ENCODE measurements at regions of chr3 and their contacts with region 1.

Region 1: GRCh38 chr3:57169872-57170623 is 4.9 kb upstream of the IL17RD start:
- DNase-seq: peak; percentile 24 to 69 (median 48)
- ATAC-seq: peak; percentile 80
- H3K4me3 ChIP-seq: peak overlapping the region; percentile 22
- H3K4me3 Mint-ChIP-seq: peak overlapping the region; percentile 10 to 72 (median 46)
- H3K27ac ChIP-seq: no peak overlapping the region
- H3K27ac Mint-ChIP-seq: no peak overlapping the region
- H3K4me1 ChIP-seq: no peaks in the 10 kb centered on the region
- H3K4me1 Mint-ChIP-seq: peaks cover 0 to 11% (median 7%) of the 10 kb centered on the region in 7 donors
- H3K27me3 ChIP-seq: peaks cover 0 to 4% of the 10 kb centered on the region in 2 donors
- H3K27me3 Mint-ChIP-seq: peaks cover 50 to 72% (median 55%) of the 10 kb centered on the region in 5 donors

Region 2: DNA sequence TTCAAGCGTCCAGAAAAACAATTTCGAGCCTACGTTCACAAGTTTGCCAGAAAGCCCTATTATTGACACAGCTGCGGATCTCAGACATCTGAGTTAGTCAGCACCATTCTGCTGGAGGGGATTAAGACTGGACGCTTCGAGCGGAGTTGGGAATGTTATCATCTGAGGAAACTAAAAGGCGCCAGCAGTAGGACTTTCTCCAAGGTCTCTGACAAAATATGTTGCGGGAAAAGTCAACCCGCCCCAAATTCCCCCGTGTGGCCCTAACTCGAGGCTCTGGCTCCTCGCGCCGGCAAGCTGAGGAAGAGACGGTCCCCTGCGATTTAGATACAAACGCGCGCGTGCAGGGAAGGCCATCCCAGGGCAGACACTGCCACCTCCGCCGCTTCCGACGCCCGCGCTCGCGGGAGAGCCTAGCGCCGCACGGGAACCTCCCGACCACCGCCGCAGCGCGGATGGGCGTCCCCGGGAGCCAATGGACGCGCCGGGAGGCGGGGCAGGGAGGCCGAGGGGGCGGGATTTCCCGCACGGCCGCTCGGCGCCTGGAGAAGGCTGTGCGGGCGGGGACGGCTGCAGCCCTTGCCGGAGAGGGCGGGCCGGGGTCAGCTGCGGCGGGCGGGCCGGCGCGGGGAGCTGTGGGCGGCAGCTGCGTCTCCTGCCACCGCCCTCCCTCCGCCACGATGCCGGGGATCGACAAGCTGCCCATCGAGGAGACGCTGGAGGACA is 57.3 kb after region 1 on chr3 and contains the start of gene APPL1:
- CTCF ChIA-PET with region 1: no interaction called
- POLR2A ChIA-PET with region 1: no interaction called
- intact Hi-C with region 1: loop called (anchors 1 kb)
- DNase-seq: peak; percentile 76 to 97 (median 82)
- ATAC-seq: peak; percentile 96
- H3K4me3 ChIP-seq: peak within 1 kb of the TSS; percentile 88
- H3K4me3 Mint-ChIP-seq: peak within 1 kb of the TSS; percentile 89 to 95 (median 93)
- H3K27ac ChIP-seq: peak within 1 kb of the TSS; percentile 71
- H3K27ac Mint-ChIP-seq: peak within 1 kb of the TSS; percentile 72 to 90 (median 86)
- H3K4me1 ChIP-seq: peaks cover 9 to 12% of the 10 kb centered on the region in 2 donors
- H3K4me1 Mint-ChIP-seq: peaks cover 17 to 38% (median 29%) of the 10 kb centered on the region in 7 donors
- H3K27me3 ChIP-seq: no peaks in the 10 kb centered on the region
- H3K27me3 Mint-ChIP-seq: peaks cover 0 to 5% (median 0%) of the 10 kb centered on the region in 5 donors
- total RNA-seq, gene APPL1: 25.4 to 42.1 (median 29.2) TPM

Region 3: DNA sequence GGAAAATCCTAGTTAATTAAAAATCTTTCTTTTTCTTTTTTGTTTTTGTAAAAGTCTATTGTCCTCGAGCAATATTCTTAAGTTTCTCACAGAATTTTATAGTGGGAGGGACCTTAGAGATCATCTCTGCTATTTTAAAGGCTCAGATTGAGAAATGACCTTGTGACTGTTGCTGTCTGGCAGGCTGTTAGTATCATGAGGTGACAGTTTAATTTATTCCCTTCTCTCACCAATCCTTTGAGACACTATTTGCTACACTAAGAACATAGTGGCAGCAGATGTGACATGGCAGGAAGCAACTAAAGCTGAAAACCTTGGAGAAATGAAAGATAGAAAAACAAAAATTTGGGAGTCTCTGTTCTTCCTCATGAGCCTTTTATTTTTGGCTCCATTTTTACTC is 82.4 kb after region 1 on chr3:
- CTCF ChIA-PET with region 1: no interaction called
- POLR2A ChIA-PET with region 1: no interaction called
- intact Hi-C with region 1: no loop called
- DNase-seq: no peak
- ATAC-seq: no peak
- H3K4me3 ChIP-seq: no peak overlapping the region
- H3K4me3 Mint-ChIP-seq: no peak overlapping the region
- H3K27ac ChIP-seq: no peak overlapping the region
- H3K27ac Mint-ChIP-seq: no peak overlapping the region
- H3K4me1 ChIP-seq: no peaks in the 10 kb centered on the region
- H3K4me1 Mint-ChIP-seq: no peaks in the 10 kb centered on the region
- H3K27me3 ChIP-seq: no peaks in the 10 kb centered on the region
- H3K27me3 Mint-ChIP-seq: no peaks in the 10 kb centered on the region

Region 4: DNA sequence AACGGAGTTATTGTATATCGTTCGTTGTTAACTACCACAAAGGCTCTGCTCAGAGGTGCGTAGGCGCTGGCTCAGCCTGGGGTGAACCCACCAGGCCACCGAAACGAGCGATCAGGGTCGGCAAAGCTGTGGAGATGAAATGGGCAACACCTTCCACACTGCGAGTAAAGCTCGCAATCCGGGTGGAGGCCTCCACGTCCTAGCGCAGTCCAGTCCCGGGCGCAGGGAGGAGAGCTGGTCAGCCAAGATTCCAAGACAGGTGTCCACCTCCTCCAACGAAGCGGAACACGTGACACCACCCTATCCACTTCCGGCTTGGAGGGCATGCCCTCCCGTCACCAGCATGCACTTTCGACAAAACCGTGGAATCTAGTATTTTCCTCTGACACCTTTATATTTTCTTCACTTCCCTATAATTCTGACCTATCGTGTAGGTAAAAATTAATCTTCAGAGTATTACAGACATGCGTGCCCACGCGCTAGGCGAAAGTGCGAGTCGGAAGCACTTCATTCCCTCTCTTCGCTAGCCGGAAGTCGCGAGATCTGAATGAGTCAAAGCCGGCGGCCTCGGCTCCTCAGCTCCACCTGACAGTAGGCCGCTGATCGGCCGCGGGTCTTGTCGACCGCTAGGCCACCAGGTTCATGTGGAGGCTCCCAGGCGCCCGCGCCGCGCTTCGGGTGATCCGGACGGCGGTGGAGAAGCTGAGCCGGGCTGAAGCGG is 385.9 kb after region 1 on chr3 and contains the start of gene PDE12:
- CTCF ChIA-PET with region 1: no interaction called
- POLR2A ChIA-PET with region 1: no interaction called
- intact Hi-C with region 1: loop called in 1 of 2 experiments (anchors 5 kb)
- DNase-seq: peak; percentile 68 to 87 (median 81)
- ATAC-seq: peak; percentile 86
- H3K4me3 ChIP-seq: peak within 1 kb of the TSS; percentile 74
- H3K4me3 Mint-ChIP-seq: peak within 1 kb of the TSS; percentile 85 to 99 (median 92)
- H3K27ac ChIP-seq: peak within 1 kb of the TSS; percentile 96
- H3K27ac Mint-ChIP-seq: peak within 1 kb of the TSS; percentile 94 to 99 (median 98)
- H3K4me1 ChIP-seq: peaks cover 22 to 26% of the 10 kb centered on the region in 2 donors
- H3K4me1 Mint-ChIP-seq: peaks cover 13 to 50% (median 39%) of the 10 kb centered on the region in 7 donors
- H3K27me3 ChIP-seq: no peaks in the 10 kb centered on the region
- H3K27me3 Mint-ChIP-seq: no peaks in the 10 kb centered on the region
- total RNA-seq, gene PDE12: 24.0 to 35.5 (median 27.8) TPM

Region 5: DNA sequence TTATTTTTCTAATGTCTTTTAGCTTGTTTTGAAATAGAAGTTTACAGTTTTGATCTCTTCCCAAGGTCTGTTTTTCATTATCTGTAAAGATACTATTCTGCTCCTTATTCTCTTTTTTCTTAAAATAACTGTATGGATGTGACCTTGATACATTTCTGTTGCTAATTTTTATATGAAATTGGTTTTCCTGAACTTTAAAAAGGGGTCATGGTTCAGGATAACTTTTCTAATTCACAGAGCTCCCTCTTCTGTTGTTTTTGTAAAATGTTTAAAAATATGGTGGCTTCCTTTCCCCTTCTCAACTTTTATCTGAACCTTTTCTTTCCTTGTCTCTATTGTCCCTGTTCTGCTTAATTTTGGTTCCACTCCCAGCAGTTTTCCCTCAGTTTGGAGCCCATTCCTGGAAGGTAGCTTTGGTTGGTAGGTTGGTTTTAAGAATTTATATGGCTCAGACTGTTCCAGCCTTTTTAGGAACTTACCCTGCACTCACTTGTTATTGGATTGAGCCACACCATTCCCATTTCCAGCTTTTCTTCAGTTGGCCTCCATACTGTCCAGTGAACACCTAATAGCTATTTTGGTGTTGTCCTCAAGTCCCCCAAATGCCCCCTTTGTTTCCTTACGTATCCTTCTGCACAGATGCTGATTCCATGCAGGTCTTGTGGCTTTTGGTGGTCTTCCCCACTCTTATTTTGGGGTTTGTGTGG is 656.4 kb after region 1 on chr3:
- CTCF ChIA-PET with region 1: no interaction called
- POLR2A ChIA-PET with region 1: no interaction called
- intact Hi-C with region 1: loop called in 1 of 2 experiments (anchors 10 kb)
- DNase-seq: peak in 1 of 9 donors; percentile 22
- ATAC-seq: no peak
- H3K4me3 ChIP-seq: no peak overlapping the region
- H3K4me3 Mint-ChIP-seq: peak overlapping the region in 1 of 10 donors; percentile 22
- H3K27ac ChIP-seq: no peak overlapping the region
- H3K27ac Mint-ChIP-seq: peak overlapping the region in 5 of 9 donors; percentile 14 to 62 (median 51)
- H3K4me1 ChIP-seq: peaks cover 0 to 4% of the 10 kb centered on the region in 2 donors
- H3K4me1 Mint-ChIP-seq: peaks cover 6 to 43% (median 37%) of the 10 kb centered on the region in 7 donors
- H3K27me3 ChIP-seq: no peaks in the 10 kb centered on the region
- H3K27me3 Mint-ChIP-seq: no peaks in the 10 kb centered on the region

Region 6: GRCh38 chr3:57910988-57911387 is 740.9 kb after region 1 on chr3:
- CTCF ChIA-PET with region 1: no interaction called
- POLR2A ChIA-PET with region 1: no interaction called
- intact Hi-C with region 1: loop called in 1 of 2 experiments (anchors 1 kb)
- DNase-seq: peak in 5 of 9 donors; percentile 5 to 25 (median 17)
- ATAC-seq: no peak
- H3K4me3 ChIP-seq: no peak overlapping the region
- H3K4me3 Mint-ChIP-seq: no peak overlapping the region
- H3K27ac ChIP-seq: no peak overlapping the region
- H3K27ac Mint-ChIP-seq: no peak overlapping the region
- H3K4me1 ChIP-seq: no peaks in the 10 kb centered on the region
- H3K4me1 Mint-ChIP-seq: peaks cover 0 to 2% (median 0%) of the 10 kb centered on the region in 7 donors
- H3K27me3 ChIP-seq: no peaks in the 10 kb centered on the region
- H3K27me3 Mint-ChIP-seq: no peaks in the 10 kb centered on the region

Measured in naive thymus-derived CD4-positive, alpha-beta T cell (primary cell).